A673 (cell line): ENCODE measurements at regions of chr12 and their contacts with region 1.

Region 1: DNA sequence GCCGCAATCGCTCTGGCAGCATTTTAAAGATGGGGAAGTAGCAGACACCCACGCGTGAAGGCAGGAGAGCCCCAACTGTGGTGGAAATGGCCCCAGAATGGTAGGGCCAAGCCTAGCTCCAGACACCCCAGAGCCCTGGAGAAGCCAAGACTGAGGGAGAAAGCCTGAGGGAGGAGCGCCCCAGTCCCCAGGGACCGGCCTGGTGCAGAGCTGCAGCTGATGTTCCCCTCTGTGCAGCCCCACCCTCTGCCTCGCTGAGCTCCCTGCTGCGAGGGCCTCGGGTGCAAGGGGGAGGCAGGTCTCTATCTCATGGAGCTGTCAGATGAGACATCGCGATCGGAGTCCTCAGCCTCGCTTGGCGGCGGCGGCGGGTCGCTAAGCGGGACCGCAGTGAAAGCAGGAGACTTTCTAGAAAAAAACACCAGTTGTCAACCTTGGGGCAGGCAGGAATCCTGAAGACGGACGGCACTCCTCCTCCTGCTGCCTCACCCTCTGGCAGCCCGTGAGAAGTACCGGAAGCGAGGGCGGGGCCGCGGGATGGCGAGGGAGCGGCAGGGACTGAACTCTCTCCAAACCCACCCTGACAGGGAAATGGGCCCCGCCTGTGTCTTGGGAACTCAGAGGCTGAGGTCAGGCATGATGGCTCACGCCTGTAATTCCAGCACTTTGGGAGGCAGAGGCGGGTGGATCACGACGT is 6.0 kb downstream of the GAPDH start:
- DNase-seq: peak; percentile 94
- H3K4me3 ChIP-seq: peak overlapping the region; percentile 34
- H3K27ac ChIP-seq: peak overlapping the region; percentile 50
- H3K4me1 ChIP-seq: peaks cover 39% of the 10 kb centered on the region
- H3K27me3 ChIP-seq: no peaks in the 10 kb centered on the region
- CTCF ChIP-seq: peak; percentile 35; the same call in 1 of the 2 replicates

Region 2: DNA sequence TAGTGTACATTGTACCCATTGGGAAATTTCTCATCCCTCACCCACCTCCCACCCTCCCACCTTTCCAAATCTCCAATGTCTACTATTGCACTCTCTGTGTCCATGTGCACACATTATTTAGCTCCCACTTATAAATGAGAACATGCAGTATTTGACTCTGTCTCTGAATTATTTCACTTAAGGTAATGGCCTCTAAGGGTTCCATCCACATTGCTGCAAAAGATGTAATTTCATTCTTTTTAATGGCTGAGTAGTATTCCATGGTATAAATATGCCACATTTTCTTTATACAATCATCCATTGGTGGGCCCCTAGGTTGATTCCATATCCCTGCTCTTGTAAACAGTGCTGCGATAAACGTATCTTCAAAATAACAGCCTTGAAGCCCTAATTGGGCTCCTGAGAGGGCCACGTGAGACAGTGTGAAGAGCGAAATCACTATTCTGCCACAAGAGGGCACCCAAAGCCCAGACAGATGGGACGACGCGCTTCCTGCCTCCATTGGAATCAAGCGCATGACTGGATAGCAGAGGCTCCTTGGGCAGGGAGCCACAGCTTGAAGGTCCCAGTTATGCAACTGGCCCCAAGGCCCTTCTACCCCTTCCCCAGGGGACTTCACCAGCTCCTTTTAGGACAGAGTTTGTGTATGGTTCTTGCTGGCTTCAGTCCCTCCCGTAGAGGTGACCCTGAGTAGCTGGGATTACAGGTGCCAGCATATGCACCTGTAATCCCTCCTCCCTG is 116.9 kb before region 1 on chr12:
- CTCF ChIA-PET with region 1: interaction called, 4 read pairs
- POLR2A ChIA-PET with region 1: no interaction called
- intact Hi-C with region 1: loop called (anchors 2 kb)
- DNase-seq: peak; percentile 96
- H3K4me3 ChIP-seq: no peak overlapping the region
- H3K27ac ChIP-seq: no peak overlapping the region
- H3K4me1 ChIP-seq: no peaks in the 10 kb centered on the region
- H3K27me3 ChIP-seq: no peaks in the 10 kb centered on the region
- CTCF ChIP-seq: peak; percentile 89

Region 3: DNA sequence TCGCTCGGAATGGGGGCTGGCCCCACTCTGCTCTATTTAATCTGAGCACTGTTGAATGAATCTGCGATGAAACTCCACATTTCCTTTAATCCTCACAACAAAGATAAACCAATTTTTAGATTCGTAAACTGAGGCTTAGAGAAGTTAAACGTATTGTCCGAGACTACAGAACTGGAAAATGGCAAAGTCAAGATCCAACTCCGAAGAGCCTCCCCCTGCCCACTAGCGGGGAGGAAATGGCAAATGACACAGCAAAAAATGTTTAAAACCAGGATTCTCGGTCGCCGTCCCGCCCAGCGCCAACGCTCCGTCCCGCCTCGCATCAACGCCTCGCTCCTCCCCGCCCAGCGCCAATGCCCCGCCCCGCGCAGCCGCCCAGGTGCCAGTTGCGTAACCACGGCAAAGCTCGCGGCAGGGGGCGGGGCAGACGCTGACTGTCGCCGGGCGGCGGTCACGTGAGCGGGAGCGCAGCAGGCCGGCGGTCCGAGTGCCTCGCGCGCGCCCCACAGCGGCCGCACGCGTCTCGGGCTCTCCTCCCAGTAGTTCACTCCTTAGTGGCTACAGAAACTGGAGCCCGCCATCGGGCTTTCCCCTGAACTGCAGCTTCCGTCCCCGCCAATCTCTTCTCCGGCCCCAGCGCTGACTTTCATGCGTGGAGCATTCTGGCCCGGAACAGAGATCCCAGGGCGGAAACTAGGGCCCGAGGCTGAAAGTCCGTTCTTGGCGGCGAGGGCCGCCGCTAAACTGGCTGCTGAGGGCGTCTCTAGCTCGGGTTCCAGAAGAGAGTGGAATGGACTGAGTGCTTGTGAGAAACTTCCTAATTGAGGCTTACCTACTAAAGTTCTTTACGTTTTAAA is 350.7 kb after region 1 on chr12:
- CTCF ChIA-PET with region 1: no interaction called
- POLR2A ChIA-PET with region 1: interaction called, 21 read pairs
- intact Hi-C with region 1: no loop called
- DNase-seq: peak; percentile 98
- H3K4me3 ChIP-seq: peak overlapping the region; percentile 46
- H3K27ac ChIP-seq: peak overlapping the region; percentile 97
- H3K4me1 ChIP-seq: peaks cover 7% of the 10 kb centered on the region
- H3K27me3 ChIP-seq: no peaks in the 10 kb centered on the region
- CTCF ChIP-seq: peak; percentile 77